Posterior vena cava (tissue), 2 donors: ENCODE measurements at regions of chr2 and their contacts with region 1.

Region 1: GRCh38 chr2:154600927-154601494 is 97.5 kb upstream of the KCNJ3 start:
- DNase-seq: no peak

Region 2: DNA sequence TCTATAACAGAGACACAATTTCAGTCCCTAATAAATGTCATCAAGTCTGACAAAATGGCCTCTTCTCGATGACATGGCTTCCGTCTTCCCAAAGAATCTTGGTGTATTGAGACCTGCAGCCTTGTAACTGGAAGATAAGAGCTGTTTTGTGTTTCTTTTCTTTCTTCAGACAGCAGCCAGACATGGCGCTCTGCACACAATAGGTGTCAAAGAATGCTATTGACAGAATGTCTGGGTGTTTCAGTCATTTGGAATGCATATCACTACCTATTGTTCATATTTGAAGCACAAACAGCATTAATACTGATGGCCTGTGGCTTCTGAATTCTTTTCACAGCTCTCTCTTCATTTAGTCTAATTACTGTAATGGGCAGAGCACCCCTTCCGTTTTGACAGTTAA is 1467.3 kb before region 1 on chr2:
- intact Hi-C with region 1: no loop called
- DNase-seq: no peak

Region 3: DNA sequence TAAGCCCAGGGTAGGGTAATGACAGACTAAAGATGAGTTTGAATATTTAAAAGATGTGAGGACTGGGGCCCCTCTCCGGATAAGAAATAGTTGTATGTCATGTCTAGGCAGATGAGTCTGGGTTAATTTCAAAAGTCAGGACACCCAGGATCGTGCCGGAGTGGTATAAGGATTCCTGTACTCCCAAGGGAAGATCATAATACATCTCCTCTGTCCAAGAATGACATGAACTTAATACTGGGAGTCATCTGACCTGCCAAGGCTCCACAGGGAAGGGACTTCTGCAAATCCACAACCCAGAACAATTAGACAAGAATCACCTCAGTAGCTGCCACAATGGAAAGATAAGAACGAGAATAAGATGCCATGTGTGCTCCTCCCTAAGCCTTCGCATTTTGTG is 1139.6 kb before region 1 on chr2:
- intact Hi-C with region 1: no loop called
- DNase-seq: no peak

Region 4: GRCh38 chr2:154361276-154361675 is 239.7 kb before region 1 on chr2:
- intact Hi-C with region 1: loop called in 1 of 2 experiments (anchors 5 kb)
- DNase-seq: no peak

Region 5: GRCh38 chr2:154658854-154659253 is 57.8 kb after region 1 on chr2:
- intact Hi-C with region 1: no loop called
- DNase-seq: no peak

Region 6: GRCh38 chr2:154700139-154700538 is 99.1 kb after region 1 on chr2:
- intact Hi-C with region 1: no loop called
- DNase-seq: no peak